ENCODE measurements at regions of chr15 and their contacts with region 1.

Region 1: GRCh38 chr15:67303490-67304363 is 49.1 kb downstream of the IQCH start:
- DNase-seq: peak; percentile 41
- H3K4me3 Mint-ChIP-seq: no peak overlapping the region
- H3K27ac Mint-ChIP-seq: no peak overlapping the region
- H3K4me1 Mint-ChIP-seq: peaks cover 15% of the 10 kb centered on the region
- H3K27me3 Mint-ChIP-seq: no peaks in the 10 kb centered on the region

Region 2: DNA sequence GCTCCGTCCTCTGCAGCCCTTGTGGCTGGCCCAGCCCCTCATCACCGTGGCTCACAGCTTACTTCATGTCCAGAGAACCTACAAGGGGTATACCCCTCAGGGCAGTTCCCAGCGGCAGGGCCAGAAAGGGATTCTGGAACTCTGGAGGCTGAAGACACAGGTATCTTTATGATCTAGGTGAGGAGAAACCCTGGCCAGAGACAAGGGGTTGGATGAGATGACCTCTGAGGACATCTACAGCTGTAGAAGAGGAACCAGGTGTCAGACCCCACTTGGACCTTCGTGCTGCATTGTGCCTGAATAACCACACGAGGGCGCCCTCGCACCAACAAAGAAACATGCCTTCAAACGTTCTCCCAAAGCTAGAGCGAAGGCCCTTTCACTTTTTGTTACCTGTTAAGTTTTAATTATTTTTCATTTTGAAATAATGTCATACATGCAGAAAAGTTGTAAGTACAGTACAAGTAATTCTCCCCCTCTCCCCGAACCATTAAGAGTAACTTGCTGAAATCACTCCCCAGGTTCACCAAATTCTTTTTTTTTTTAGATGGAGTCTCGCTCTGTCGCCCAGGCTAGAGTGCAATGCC is 357.1 kb before region 1 on chr15:
- CTCF ChIA-PET with region 1: interaction called, 44 read pairs
- intact Hi-C with region 1: loop called (anchors 1 kb)
- DNase-seq: peak; percentile 85
- H3K4me3 Mint-ChIP-seq: no peak overlapping the region
- H3K27ac Mint-ChIP-seq: no peak overlapping the region
- H3K4me1 Mint-ChIP-seq: no peaks in the 10 kb centered on the region
- H3K27me3 Mint-ChIP-seq: no peaks in the 10 kb centered on the region

Region 3: DNA sequence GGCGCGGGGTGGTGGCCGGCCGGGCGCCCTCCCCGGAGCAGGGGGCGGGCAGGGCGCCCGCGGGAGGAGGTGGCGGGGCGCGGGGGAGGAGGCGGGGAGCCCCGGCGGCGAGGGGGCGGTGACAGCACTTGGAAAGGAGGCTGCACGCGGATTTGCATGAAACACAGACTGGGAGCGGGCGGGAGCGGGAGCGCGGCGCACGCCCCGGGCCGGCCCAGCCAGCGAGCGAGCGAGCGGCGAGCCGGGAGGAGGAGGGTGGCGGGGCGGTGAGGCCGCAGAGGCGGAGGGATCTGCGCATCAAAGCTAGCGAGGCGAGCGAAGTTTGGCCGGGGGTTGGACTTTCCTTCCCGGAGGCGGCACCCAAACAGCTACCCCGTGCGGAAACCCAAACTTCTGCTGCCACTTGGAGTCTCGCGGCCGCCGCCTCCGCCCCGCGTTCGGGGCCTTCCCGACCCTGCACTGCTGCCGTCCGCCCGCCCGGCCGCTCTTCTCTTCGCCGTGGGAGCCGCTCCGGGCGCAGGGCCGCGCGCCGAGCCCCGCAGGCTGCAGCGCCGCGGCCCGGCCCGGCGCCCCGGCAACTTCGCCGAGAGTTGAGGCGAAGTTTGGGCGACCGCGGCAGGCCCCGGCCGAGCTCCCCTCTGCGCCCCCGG is 238.2 kb before region 1 on chr15 and contains the start of gene SMAD3:
- CTCF ChIA-PET with region 1: no interaction called
- intact Hi-C with region 1: loop called (anchors 5 kb)
- DNase-seq: peak; percentile 80
- H3K4me3 Mint-ChIP-seq: peak within 1 kb of the TSS; percentile 95
- H3K27ac Mint-ChIP-seq: peak within 1 kb of the TSS; percentile 89
- H3K4me1 Mint-ChIP-seq: peaks cover 50% of the 10 kb centered on the region
- H3K27me3 Mint-ChIP-seq: peaks cover 17% of the 10 kb centered on the region
- total RNA-seq, gene SMAD3: 35.1 to 39.2 TPM

Region 4: GRCh38 chr15:67080900-67081431 is 222.8 kb before region 1 on chr15:
- CTCF ChIA-PET with region 1: interaction called, 3 read pairs
- intact Hi-C with region 1: loop called (anchors 5 kb)
- DNase-seq: peak; percentile 83
- H3K4me3 Mint-ChIP-seq: no peak overlapping the region
- H3K27ac Mint-ChIP-seq: peak overlapping the region; percentile 76
- H3K4me1 Mint-ChIP-seq: peaks cover 80% of the 10 kb centered on the region
- H3K27me3 Mint-ChIP-seq: no peaks in the 10 kb centered on the region

Region 5: DNA sequence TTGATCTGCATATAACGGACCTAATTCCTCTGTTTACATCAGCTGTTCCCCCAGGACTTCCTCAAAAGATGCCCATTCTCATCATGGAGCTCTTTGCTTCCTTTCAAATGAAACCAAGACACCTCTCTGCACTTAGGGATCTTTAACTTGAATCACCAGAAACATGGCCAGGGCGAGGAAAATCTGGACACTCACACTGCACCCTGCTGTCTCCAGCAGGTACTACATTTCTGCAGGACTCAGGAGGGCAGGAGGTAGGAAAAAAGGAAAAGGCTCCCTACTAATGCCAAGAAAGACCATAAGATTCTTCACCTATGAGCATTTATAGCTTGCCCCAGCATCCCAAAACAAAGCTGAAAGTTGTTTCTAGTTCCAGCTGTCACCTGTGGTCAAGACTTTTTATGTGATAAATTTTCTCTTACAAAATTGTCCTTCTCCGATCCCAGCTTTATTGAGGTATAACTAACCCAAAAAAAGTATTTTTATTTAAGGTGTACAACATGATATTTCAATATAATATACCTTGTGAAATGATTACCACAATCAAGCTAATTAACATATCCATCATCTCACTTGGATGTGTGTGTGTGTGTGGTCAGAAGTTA is 129.9 kb after region 1 on chr15:
- CTCF ChIA-PET with region 1: interaction called, 3 read pairs
- intact Hi-C with region 1: loop called (anchors 5 kb)
- DNase-seq: peak; percentile 51
- H3K4me3 Mint-ChIP-seq: no peak overlapping the region
- H3K27ac Mint-ChIP-seq: no peak overlapping the region
- H3K4me1 Mint-ChIP-seq: no peaks in the 10 kb centered on the region
- H3K27me3 Mint-ChIP-seq: no peaks in the 10 kb centered on the region

Region 6: GRCh38 chr15:67762610-67763368 is 459.1 kb after region 1 on chr15:
- CTCF ChIA-PET with region 1: no interaction called
- intact Hi-C with region 1: loop called (anchors 5 kb)
- DNase-seq: peak; percentile 83
- H3K4me3 Mint-ChIP-seq: no peak overlapping the region
- H3K27ac Mint-ChIP-seq: peak overlapping the region; percentile 28
- H3K4me1 Mint-ChIP-seq: peaks cover 61% of the 10 kb centered on the region
- H3K27me3 Mint-ChIP-seq: no peaks in the 10 kb centered on the region